IMR-90 (cell line): ENCODE measurements at regions of chr15 and their contacts with region 1.

Region 1: DNA sequence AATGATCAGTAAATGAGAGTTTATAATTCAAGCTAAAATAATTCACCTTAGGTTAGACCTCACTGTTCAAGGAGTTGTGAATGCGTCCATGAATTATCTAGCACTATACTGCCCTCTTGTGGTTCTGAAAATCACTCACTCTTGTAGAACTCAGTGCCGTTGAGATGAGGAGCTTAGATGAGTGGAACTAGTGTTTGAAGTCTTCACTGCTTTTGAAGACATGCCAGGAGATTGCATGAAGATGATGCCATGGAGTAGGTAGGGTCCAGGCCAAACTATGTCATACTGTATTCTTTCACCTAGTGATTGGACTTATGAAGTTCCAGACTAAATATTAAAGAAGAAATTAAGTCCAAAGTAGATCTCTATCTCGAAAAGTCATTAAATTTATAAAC is 28.8 kb downstream of the LYSMD4 start:
- DNase-seq: peak; percentile 90
- ATAC-seq: peak; percentile 58
- H3K4me3 ChIP-seq: no peak overlapping the region
- H3K27ac ChIP-seq: no peak overlapping the region
- H3K4me1 ChIP-seq: peaks cover 15% of the 10 kb centered on the region
- H3K27me3 ChIP-seq: no peaks in the 10 kb centered on the region
- CTCF ChIP-seq: peak; percentile 78
- POLR2A ChIP-seq: no peak; the same call in 1 of the 2 replicates
- RAD21 ChIP-seq: peak; percentile 80

Region 2: GRCh38 chr15:99282121-99282520 is 422.3 kb before region 1 on chr15:
- CTCF ChIA-PET with region 1: interaction called, 22 read pairs
- POLR2A ChIA-PET with region 1: no interaction called
- dilution Hi-C with region 1: no loop called
- in situ Hi-C with region 1: loop called (anchors 5 kb)
- intact Hi-C with region 1: loop called (anchors 1 kb)
- DNase-seq: no peak
- ATAC-seq: no peak
- H3K4me3 ChIP-seq: no peak overlapping the region
- H3K27ac ChIP-seq: no peak overlapping the region
- H3K4me1 ChIP-seq: no peaks in the 10 kb centered on the region; the same call in 1 of the 2 replicates
- H3K27me3 ChIP-seq: no peaks in the 10 kb centered on the region
- CTCF ChIP-seq: no peak
- POLR2A ChIP-seq: no peak
- RAD21 ChIP-seq: no peak

Region 3: DNA sequence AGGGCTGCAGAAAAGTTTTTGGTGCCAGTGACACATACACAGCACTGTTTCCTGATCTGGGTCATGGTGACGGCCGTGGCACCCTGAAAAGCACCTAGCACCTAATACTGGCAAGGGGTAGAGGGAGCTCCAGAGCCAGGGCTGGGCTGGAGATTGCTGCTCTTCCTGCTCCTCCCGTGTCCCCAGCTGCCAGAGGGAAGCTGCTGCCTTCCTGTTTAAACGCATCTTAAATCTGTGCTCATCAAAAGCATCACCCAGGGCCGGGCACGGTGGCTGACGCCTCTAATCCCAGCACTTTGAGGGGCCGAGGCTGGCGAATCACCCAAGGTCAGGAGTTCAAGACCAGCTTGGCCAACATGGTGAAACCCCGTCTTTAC is 295.4 kb before region 1 on chr15:
- CTCF ChIA-PET with region 1: interaction called, 35 read pairs
- POLR2A ChIA-PET with region 1: no interaction called
- dilution Hi-C with region 1: no loop called
- in situ Hi-C with region 1: no loop called
- intact Hi-C with region 1: loop called (anchors 1 kb)
- DNase-seq: peak; percentile 60
- ATAC-seq: peak; percentile 61
- H3K4me3 ChIP-seq: no peak overlapping the region
- H3K27ac ChIP-seq: no peak overlapping the region
- H3K4me1 ChIP-seq: peaks cover 10% of the 10 kb centered on the region
- H3K27me3 ChIP-seq: no peaks in the 10 kb centered on the region
- CTCF ChIP-seq: peak; percentile 60
- POLR2A ChIP-seq: no peak
- RAD21 ChIP-seq: peak; percentile 76

Region 4: GRCh38 chr15:99565299-99566156 is 138.9 kb before region 1 on chr15 and contains the start of gene MEF2A:
- CTCF ChIA-PET with region 1: interaction called, 11 read pairs
- POLR2A ChIA-PET with region 1: no interaction called
- dilution Hi-C with region 1: no loop called
- in situ Hi-C with region 1: no loop called
- intact Hi-C with region 1: loop called (anchors 2 kb)
- DNase-seq: peak; percentile 93
- ATAC-seq: peak; percentile 81
- H3K4me3 ChIP-seq: peak within 1 kb of the TSS; percentile 75
- H3K27ac ChIP-seq: peak within 1 kb of the TSS; percentile 91
- H3K4me1 ChIP-seq: peaks cover 4% of the 10 kb centered on the region
- H3K27me3 ChIP-seq: peaks cover 4% of the 10 kb centered on the region; the same call in 1 of the 2 replicates
- CTCF ChIP-seq: 0 out of 2 replicates have a peak, but pooled peaks have one; percentile 6
- POLR2A ChIP-seq: peak; percentile 70
- RAD21 ChIP-seq: no peak
- total RNA-seq, gene MEF2A: 16.7 and 20.8 TPM in 2 replicates